Naive thymus-derived CD4-positive, alpha-beta T cell (primary cell): ENCODE measurements at regions of chr7 and their contacts with region 1.

Region 1: DNA sequence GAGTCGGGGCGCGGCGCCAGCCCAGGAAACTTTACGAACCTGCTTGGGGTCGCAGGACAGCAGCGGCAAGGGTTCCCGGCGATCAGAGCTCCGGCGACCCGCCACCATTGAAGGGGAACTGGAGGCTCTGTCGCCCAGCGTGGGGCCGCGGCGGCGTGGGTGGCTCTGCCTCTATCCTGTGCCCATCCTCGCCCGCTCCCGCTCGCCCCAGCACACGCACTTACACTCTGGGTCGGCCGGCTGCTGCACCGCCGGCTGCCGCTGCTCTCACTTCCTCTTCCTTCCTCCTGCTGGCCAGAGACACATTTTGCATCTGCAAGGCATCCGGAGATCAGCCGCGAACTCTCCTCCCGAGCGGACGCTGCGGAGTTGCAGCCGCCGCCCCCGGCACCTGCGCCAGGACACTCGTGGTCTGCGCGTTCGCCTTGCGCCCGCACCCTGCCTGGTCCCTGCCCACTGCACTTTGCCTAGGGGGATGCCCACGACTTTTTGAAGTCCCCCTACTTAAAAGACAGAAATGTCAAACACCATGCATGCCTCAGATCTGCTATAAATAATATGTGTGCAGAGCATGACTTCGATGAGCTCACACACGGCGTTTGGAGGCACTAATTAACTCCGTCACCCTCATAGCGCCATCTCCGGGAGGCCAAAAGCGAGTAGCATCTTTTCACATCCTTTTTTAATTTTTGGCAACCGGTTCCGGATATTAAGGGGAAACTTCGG is at the start of gene ELMO1:
- DNase-seq: peak; percentile 63 to 87 (median 86)
- ATAC-seq: peak; percentile 83
- H3K4me3 ChIP-seq: peak within 1 kb of the TSS; percentile 83
- H3K4me3 Mint-ChIP-seq: peak within 1 kb of the TSS; percentile 94 to 99 (median 97)
- H3K27ac ChIP-seq: peak within 1 kb of the TSS; percentile 89
- H3K27ac Mint-ChIP-seq: peak within 1 kb of the TSS; percentile 97 to 100 (median 99)
- H3K4me1 ChIP-seq: peaks cover 8 to 29% of the 10 kb centered on the region in 2 donors
- H3K4me1 Mint-ChIP-seq: peaks cover 21 to 62% (median 54%) of the 10 kb centered on the region in 7 donors
- H3K27me3 ChIP-seq: no peaks in the 10 kb centered on the region
- H3K27me3 Mint-ChIP-seq: peaks cover 0 to 10% (median 0%) of the 10 kb centered on the region in 5 donors
- total RNA-seq, gene ELMO1: 119 to 160 (median 126) TPM

Region 2: DNA sequence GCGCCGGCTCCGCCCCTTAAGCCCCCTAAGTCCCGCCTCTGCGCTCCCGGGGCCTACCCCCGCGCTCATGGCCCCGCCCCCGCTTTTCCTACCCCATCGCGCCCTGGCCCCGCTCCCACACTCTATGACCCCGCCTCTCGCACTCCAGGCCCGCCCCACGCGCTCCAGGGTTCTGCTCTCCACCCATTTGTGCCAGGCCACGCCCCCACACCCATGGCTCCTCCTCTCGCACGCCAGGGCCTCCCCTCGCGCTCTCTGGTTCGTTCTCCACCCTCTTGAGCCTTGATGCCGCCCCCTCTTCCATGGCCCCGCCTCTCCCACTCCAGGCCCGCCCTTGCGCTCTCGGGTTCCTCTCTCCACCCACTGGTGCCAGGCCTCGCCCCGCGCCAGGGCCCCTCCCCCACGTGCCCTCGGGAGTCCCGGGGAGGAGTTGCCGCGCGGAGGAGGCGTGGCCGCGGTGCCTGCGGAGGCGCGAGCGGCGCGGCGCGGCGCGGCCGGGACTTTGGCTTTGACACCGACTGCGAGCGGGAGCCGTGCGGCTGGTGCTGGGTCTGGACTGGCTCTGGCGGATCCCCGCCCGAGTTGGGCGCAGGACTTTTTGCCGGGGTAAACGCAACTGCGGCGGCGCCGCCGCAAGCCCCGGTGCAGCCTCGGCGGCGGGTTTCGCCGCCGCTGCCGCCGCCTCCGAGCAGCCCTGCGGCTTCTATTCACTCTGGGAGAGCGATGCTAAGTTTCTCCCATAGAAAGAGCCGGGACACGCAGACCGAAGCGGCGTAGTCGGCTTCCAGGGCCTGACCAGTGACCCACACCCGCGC is 1295.8 kb before region 1 on chr7 and contains the start of gene EEPD1:
- CTCF ChIA-PET with region 1: no interaction called
- POLR2A ChIA-PET with region 1: no interaction called
- intact Hi-C with region 1: loop called in 1 of 2 experiments (anchors 5 kb)
- DNase-seq: peak; percentile 99 to 100 (median 100)
- ATAC-seq: peak; percentile 96
- H3K4me3 ChIP-seq: peak within 1 kb of the TSS; percentile 72
- H3K4me3 Mint-ChIP-seq: peak within 1 kb of the TSS; percentile 70 to 93 (median 84)
- H3K27ac ChIP-seq: peak within 1 kb of the TSS; percentile 73
- H3K27ac Mint-ChIP-seq: peak within 1 kb of the TSS in 8 of 9 donors; percentile 10 to 87 (median 74)
- H3K4me1 ChIP-seq: peaks cover 7 to 16% of the 10 kb centered on the region in 2 donors
- H3K4me1 Mint-ChIP-seq: peaks cover 12 to 31% (median 24%) of the 10 kb centered on the region in 7 donors
- H3K27me3 ChIP-seq: no peaks in the 10 kb centered on the region
- H3K27me3 Mint-ChIP-seq: peaks cover 0 to 21% (median 0%) of the 10 kb centered on the region in 5 donors
- total RNA-seq, gene EEPD1: 2.2 to 13.2 (median 3.7) TPM

Region 3: GRCh38 chr7:36639826-36640225 is 809.0 kb before region 1 on chr7:
- CTCF ChIA-PET with region 1: no interaction called
- POLR2A ChIA-PET with region 1: interaction called, 4 read pairs
- intact Hi-C with region 1: loop called in 1 of 2 experiments (anchors 10 kb)
- DNase-seq: peak; percentile 14 to 81 (median 67)
- ATAC-seq: peak; percentile 88
- H3K4me3 ChIP-seq: peak overlapping the region; percentile 3
- H3K4me3 Mint-ChIP-seq: peak overlapping the region; percentile 54 to 83 (median 67)
- H3K27ac ChIP-seq: peak overlapping the region; percentile 67
- H3K27ac Mint-ChIP-seq: peak overlapping the region; percentile 85 to 99 (median 95)
- H3K4me1 ChIP-seq: peaks cover 46 to 70% of the 10 kb centered on the region in 2 donors
- H3K4me1 Mint-ChIP-seq: peaks cover 42 to 100% (median 95%) of the 10 kb centered on the region in 7 donors
- H3K27me3 ChIP-seq: no peaks in the 10 kb centered on the region
- H3K27me3 Mint-ChIP-seq: no peaks in the 10 kb centered on the region

Region 4: GRCh38 chr7:37284805-37285231 is 164.0 kb before region 1 on chr7:
- CTCF ChIA-PET with region 1: interaction called, 16 read pairs
- POLR2A ChIA-PET with region 1: interaction called, 6 read pairs
- intact Hi-C with region 1: loop called (anchors 1 kb)
- DNase-seq: peak in 7 of 9 donors; percentile 15 to 38 (median 24)
- ATAC-seq: peak; percentile 59
- H3K4me3 ChIP-seq: no peak overlapping the region
- H3K4me3 Mint-ChIP-seq: no peak overlapping the region
- H3K27ac ChIP-seq: no peak overlapping the region
- H3K27ac Mint-ChIP-seq: peak overlapping the region in 5 of 9 donors; percentile 8 to 76 (median 26)
- H3K4me1 ChIP-seq: peaks cover 8 to 18% of the 10 kb centered on the region in 2 donors
- H3K4me1 Mint-ChIP-seq: peaks cover 38 to 80% (median 61%) of the 10 kb centered on the region in 7 donors
- H3K27me3 ChIP-seq: no peaks in the 10 kb centered on the region
- H3K27me3 Mint-ChIP-seq: no peaks in the 10 kb centered on the region

Region 5: DNA sequence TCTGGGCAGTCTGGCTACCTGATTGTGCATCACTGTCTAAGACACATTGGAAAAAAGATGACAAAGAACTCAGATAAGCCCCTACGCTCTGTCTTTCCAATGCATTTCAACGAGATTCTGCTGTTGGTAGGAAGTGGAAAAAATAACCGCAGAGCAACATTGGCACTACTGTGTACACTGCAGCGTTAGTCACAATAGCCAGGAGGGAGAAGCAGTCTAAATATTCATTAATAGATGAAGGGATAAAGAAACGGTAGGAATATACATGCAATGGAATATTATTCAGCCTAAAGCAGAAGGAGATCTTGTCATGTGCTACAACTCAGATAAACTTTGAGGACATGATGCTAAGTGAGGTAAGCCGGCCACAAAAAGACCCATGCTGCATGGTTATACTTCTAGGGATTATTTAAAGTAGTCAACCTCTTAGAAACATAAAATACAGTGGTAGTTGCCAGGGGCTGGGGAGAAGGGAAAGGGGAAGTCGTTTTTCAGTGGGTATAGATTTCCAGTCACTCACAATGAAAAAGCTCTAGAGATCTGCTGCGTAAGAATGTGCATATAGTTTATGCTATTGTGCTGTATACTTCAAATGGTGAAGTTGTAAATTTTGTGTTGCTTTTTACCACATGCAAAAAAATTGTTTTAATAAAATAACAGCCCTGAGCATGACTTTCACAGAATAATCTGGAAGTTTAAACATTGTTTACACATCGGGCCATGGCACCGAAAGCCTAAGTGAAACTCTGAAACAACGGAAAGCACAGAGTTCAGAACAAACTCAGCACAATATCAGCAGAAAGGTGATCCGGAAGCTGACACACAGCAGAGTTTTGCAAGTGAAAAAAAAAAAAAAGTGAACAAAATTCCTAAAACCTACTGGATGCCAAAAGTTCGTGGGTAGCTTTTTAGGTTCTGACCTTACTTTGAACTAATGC is 40.2 kb before region 1 on chr7:
- CTCF ChIA-PET with region 1: interaction called, 13 read pairs
- POLR2A ChIA-PET with region 1: interaction called, 48 read pairs
- intact Hi-C with region 1: loop called (anchors 1 kb)
- DNase-seq: peak in 7 of 9 donors; percentile 14 to 58 (median 32)
- ATAC-seq: peak; percentile 57
- H3K4me3 ChIP-seq: peak overlapping the region; percentile 29
- H3K4me3 Mint-ChIP-seq: peak overlapping the region; percentile 66 to 91 (median 88)
- H3K27ac ChIP-seq: peak overlapping the region; percentile 54
- H3K27ac Mint-ChIP-seq: peak overlapping the region; percentile 86 to 95 (median 90)
- H3K4me1 ChIP-seq: peaks cover 19 to 34% of the 10 kb centered on the region in 2 donors
- H3K4me1 Mint-ChIP-seq: peaks cover 53 to 93% (median 86%) of the 10 kb centered on the region in 7 donors
- H3K27me3 ChIP-seq: no peaks in the 10 kb centered on the region
- H3K27me3 Mint-ChIP-seq: no peaks in the 10 kb centered on the region

Region 6: DNA sequence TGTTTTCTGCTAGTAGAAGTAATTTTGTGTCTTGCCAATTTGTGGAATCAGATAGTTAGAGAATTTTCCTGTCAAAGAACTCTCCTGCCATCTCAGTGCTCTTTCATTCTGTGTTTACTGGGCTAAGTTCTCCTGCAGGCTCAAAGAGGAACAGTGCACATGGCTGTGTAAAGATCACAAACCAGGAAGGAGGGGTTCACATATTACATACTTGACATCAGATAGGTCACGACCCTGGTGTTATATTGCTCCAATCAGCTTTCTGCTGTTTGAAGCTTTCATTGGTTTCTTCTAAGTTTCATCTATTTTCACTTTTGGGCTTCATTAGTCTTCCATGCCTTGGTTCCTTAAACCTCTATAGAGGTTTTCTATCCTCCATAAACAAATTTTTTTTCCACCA is 13.3 kb after region 1 on chr7:
- CTCF ChIA-PET with region 1: interaction called, 4 read pairs
- POLR2A ChIA-PET with region 1: interaction called, 11 read pairs
- intact Hi-C with region 1: no loop called
- DNase-seq: no peak
- ATAC-seq: no peak
- H3K4me3 ChIP-seq: no peak overlapping the region
- H3K4me3 Mint-ChIP-seq: no peak overlapping the region
- H3K27ac ChIP-seq: no peak overlapping the region
- H3K27ac Mint-ChIP-seq: no peak overlapping the region
- H3K4me1 ChIP-seq: no peaks in the 10 kb centered on the region
- H3K4me1 Mint-ChIP-seq: peaks cover 0 to 3% (median 0%) of the 10 kb centered on the region in 7 donors
- H3K27me3 ChIP-seq: no peaks in the 10 kb centered on the region
- H3K27me3 Mint-ChIP-seq: peaks cover 0 to 46% (median 5%) of the 10 kb centered on the region in 5 donors